HEK293 (cell line): ENCODE measurements at regions of chrX and their contacts with region 1.

Region 1: DNA sequence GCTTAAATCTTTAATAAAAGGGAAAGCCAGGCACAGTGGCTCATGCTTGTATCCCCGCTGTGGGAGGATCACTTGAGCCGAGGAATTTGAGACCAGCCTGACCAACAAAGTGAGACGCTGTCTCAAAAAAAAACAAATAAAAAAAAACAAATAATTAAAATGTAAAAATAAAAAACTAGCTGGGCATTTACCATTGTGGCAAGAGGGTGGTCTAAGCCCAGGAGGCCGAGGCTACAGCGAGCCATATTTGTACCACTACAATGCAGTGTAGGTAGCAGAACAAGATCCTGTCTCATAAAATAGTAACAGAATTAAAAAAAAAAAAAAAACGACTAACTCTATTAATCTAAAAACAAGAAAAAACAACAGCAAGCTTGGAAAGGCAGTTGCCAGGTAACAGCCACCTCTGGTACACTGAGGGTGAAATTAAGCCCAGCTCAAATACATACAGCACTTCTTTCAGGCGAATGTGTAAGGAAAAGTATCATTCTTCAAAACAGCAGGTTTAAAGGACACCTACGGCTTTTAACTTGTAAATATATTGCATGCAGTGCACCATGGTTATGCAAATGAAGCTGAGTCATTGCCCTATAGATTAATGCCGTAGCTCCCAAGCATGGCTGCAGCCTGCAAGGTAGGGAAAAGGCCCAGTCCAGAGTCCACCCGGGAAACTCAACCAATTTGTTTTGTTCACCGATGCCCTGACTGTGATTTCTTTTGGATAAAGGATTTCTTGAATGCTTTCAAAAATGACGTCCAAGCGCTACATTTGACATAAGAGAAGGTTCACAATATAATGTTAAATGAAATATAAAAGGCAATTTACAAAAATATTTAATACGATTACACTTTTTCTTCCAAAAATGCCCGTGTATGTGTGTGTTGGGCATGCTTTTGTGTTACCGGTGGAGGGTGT is 14.5 kb upstream of the TXLNG start:
- H3K4me3 ChIP-seq: no peak overlapping the region
- H3K27ac ChIP-seq: peak overlapping the region; percentile 88
- H3K4me1 ChIP-seq: no peaks in the 10 kb centered on the region
- CTCF ChIP-seq: no peak

Region 2: DNA sequence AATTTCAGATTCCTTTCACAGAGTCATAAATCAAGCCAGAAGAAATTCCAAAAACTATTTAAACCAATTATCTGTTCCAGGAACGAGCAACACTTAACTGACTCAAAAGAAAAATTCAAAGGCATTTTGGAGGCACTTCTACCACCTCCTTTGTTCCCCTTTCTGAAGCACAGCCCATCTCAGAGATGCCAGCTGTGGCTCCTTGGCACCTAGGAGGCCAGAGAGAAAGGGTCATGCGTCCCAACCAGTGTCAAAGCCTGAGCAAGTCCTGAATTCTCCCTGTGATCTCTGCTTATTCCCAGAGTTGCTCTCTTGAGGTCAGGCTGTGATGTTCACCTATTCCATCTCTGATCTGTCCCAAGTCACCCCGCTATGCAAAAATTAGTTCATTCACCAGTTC is 226.8 kb before region 1 on chrX:
- CTCF ChIA-PET with region 1: no interaction called
- POLR2A ChIA-PET with region 1: no interaction called
- H3K4me3 ChIP-seq: no peak overlapping the region
- H3K27ac ChIP-seq: no peak overlapping the region
- H3K4me1 ChIP-seq: no peaks in the 10 kb centered on the region
- CTCF ChIP-seq: no peak

Region 3: GRCh38 chrX:16756724-16757123 is 15.0 kb before region 1 on chrX:
- CTCF ChIA-PET with region 1: no interaction called
- POLR2A ChIA-PET with region 1: interaction called, 16 read pairs
- H3K4me3 ChIP-seq: no peak overlapping the region
- H3K27ac ChIP-seq: no peak overlapping the region
- H3K4me1 ChIP-seq: no peaks in the 10 kb centered on the region
- CTCF ChIP-seq: no peak

Region 4: GRCh38 chrX:16786139-16786790 is 14.5 kb after region 1 on chrX and contains the start of gene TXLNG:
- CTCF ChIA-PET with region 1: interaction called, 5 read pairs
- POLR2A ChIA-PET with region 1: interaction called, 42 read pairs
- H3K4me3 ChIP-seq: peak within 1 kb of the TSS; percentile 76
- H3K27ac ChIP-seq: peak within 1 kb of the TSS; percentile 62
- H3K4me1 ChIP-seq: peaks cover 10% of the 10 kb centered on the region; the same call in 1 of the 2 replicates
- CTCF ChIP-seq: no peak

Region 5: DNA sequence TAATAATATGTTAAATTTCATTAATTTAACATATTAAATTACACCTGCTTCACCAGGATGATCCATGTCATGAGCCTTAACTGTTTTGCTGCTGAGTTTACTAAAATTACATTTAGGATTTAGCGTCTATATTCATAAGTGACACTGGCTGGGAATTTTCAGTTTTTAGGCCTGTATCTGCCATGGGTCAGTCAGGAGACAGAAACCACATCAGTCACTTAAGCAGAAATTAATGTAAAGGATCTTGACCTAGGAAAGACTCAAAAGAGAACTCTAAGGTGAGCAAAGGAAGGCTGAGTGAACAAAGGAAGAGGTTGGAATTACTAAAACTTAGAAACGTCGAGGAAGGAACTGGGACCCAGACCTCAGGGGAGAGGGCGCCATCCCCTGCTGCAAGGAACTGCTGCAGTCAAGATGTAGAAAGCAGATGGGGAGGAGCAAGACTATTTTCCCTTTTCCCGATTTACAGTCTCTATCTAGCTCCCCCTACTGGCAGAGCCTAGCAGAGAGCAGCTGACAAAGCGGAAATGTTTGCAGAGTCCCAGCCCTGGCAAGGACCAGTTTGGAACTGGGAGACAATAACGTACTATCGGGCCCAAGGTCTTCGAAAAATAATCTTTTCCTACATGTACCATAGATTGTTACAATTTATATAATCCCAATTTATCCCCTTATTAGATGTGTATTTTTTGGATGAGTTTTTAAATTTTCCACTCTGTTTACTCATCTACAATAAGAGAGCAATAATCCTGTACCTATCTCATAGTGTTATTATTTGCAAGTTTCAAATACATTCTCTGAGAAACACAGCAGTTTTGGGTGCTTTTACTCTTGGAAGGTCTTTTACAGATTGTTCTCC is 121.0 kb after region 1 on chrX:
- CTCF ChIA-PET with region 1: no interaction called
- POLR2A ChIA-PET with region 1: no interaction called
- H3K4me3 ChIP-seq: no peak overlapping the region
- H3K27ac ChIP-seq: no peak overlapping the region
- H3K4me1 ChIP-seq: no peaks in the 10 kb centered on the region
- CTCF ChIP-seq: peak; percentile 78